ENCODE measurements at regions of chr19 and their contacts with region 1.

Region 1: GRCh38 chr19:48713864-48714758 is 5.4 kb downstream of the MAMSTR start:
- DNase-seq: peak; percentile 99
- ATAC-seq: peak; percentile 93
- H3K4me3 Mint-ChIP-seq: peak overlapping the region; percentile 83
- H3K27ac Mint-ChIP-seq: peak overlapping the region; percentile 84
- H3K4me1 Mint-ChIP-seq: peaks cover 14% of the 10 kb centered on the region
- H3K27me3 Mint-ChIP-seq: no peaks in the 10 kb centered on the region

Region 2: GRCh38 chr19:48203732-48204628 is 510.1 kb before region 1 on chr19:
- CTCF ChIA-PET with region 1: no interaction called
- POLR2A ChIA-PET with region 1: no interaction called
- intact Hi-C with region 1: no loop called
- DNase-seq: peak; percentile 97
- ATAC-seq: peak; percentile 100
- H3K4me3 Mint-ChIP-seq: no peak overlapping the region
- H3K27ac Mint-ChIP-seq: no peak overlapping the region
- H3K4me1 Mint-ChIP-seq: peaks cover 16% of the 10 kb centered on the region
- H3K27me3 Mint-ChIP-seq: no peaks in the 10 kb centered on the region

Region 3: GRCh38 chr19:48419158-48419920 is 294.8 kb before region 1 on chr19:
- CTCF ChIA-PET with region 1: no interaction called
- POLR2A ChIA-PET with region 1: no interaction called
- intact Hi-C with region 1: no loop called
- DNase-seq: peak; percentile 87
- ATAC-seq: peak; percentile 81
- H3K4me3 Mint-ChIP-seq: peak overlapping the region; percentile 29
- H3K27ac Mint-ChIP-seq: peak overlapping the region; percentile 83
- H3K4me1 Mint-ChIP-seq: peaks cover 21% of the 10 kb centered on the region
- H3K27me3 Mint-ChIP-seq: peaks cover 15% of the 10 kb centered on the region

Region 4: DNA sequence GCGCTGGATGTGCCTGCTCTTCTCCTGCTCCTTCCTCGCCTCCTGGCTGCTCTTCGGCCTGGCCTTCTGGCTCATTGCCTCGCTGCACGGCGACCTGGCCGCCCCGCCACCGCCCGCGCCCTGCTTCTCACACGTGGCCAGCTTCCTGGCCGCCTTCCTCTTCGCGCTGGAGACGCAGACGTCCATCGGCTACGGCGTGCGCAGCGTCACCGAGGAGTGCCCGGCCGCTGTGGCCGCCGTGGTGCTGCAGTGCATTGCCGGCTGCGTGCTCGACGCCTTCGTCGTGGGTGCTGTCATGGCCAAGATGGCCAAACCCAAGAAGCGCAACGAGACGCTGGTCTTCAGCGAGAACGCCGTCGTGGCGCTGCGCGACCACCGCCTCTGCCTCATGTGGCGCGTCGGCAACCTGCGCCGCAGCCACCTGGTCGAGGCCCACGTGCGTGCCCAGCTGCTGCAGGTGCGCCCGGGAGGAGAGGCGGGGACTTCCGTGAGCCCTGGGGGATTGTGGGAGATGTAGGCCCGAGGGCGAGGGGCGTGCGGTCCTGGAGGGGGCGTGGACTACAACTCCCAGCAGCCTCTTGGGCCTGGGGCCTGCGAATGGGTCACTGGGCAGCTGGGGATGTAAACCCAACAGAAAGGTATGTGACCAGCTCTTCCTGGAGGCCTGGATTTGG is 252.0 kb before region 1 on chr19:
- CTCF ChIA-PET with region 1: no interaction called
- POLR2A ChIA-PET with region 1: no interaction called
- intact Hi-C with region 1: no loop called
- DNase-seq: peak; percentile 43
- ATAC-seq: peak; percentile 60
- H3K4me3 Mint-ChIP-seq: no peak overlapping the region
- H3K27ac Mint-ChIP-seq: no peak overlapping the region
- H3K4me1 Mint-ChIP-seq: peaks cover 2% of the 10 kb centered on the region
- H3K27me3 Mint-ChIP-seq: no peaks in the 10 kb centered on the region

Region 5: DNA sequence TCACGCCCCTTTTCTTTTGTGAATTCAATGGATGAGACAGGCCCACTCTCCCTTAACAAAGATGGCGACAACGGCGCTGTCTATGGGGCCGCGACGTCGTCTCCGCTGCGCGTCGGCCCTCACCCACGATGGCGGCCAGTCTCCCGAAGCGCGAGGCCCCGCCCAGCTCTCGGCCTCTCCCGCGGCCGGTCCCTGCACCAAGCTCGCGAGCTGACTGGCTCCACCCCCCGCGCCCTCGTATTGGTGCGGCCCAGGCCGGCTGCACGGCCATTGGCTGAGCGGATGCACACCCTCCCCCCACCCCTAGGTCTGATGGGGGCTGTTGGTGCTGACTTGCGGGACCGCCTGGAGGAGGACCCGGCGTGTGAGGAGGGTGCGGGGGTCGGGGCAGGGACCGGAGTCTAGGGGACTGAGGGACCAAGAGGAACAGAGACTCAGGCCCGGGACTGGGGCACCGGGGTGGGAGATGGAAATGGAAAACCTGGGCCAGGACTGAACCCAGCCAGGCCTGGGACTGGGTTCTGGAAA is 90.0 kb before region 1 on chr19:
- CTCF ChIA-PET with region 1: no interaction called
- POLR2A ChIA-PET with region 1: no interaction called
- intact Hi-C with region 1: loop called in 1 of 2 experiments (anchors 1 kb)
- DNase-seq: peak; percentile 99
- ATAC-seq: peak; percentile 84
- H3K4me3 Mint-ChIP-seq: peak overlapping the region; percentile 73
- H3K27ac Mint-ChIP-seq: peak overlapping the region; percentile 99
- H3K4me1 Mint-ChIP-seq: peaks cover 45% of the 10 kb centered on the region
- H3K27me3 Mint-ChIP-seq: no peaks in the 10 kb centered on the region

Region 6: DNA sequence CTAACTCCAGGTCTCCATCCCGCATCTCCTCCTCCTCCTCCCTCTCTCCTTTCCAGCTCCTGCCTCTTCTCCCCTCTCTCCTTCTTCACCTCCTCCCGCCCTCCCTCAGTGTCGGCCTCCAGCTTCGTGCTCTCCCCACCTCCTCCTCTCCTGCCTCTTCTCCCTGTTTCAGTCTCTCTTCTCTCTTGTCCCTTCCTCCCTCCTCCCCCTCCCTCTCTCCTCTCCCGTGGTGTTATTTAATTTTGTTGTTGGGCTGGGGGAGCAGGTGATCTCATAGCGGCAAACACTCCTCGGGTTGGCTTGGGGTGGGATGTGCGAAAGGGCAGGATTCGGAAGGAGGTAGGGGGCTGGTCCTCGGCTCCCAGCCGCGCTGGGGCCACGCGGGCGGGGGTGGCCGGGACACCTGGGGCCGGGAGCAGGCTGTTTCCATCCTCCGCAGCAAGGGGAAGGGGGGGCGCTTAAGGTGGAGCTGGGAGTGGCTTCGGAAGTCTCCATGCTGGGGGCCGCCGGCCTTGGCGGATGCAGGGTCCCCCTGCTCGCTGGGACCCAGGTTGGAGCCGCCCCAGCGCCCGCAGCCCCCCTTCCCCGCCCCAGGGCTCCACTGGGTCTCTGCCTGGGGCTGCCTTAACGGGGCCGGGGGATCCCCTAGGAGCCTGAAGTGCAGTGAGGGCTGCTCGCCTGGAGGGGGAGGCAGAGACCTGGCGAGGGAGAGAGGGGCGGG is 68.0 kb before region 1 on chr19 and contains the start of gene CA11:
- CTCF ChIA-PET with region 1: no interaction called
- POLR2A ChIA-PET with region 1: no interaction called
- intact Hi-C with region 1: loop called (anchors 1 to 2 kb)
- DNase-seq: peak; percentile 96
- ATAC-seq: peak; percentile 85
- H3K4me3 Mint-ChIP-seq: peak within 1 kb of the TSS; percentile 79
- H3K27ac Mint-ChIP-seq: peak within 1 kb of the TSS; percentile 88
- H3K4me1 Mint-ChIP-seq: peaks cover 44% of the 10 kb centered on the region
- H3K27me3 Mint-ChIP-seq: no peaks in the 10 kb centered on the region
- total RNA-seq, gene CA11: 11.5 to 18.0 TPM

Region 7: DNA sequence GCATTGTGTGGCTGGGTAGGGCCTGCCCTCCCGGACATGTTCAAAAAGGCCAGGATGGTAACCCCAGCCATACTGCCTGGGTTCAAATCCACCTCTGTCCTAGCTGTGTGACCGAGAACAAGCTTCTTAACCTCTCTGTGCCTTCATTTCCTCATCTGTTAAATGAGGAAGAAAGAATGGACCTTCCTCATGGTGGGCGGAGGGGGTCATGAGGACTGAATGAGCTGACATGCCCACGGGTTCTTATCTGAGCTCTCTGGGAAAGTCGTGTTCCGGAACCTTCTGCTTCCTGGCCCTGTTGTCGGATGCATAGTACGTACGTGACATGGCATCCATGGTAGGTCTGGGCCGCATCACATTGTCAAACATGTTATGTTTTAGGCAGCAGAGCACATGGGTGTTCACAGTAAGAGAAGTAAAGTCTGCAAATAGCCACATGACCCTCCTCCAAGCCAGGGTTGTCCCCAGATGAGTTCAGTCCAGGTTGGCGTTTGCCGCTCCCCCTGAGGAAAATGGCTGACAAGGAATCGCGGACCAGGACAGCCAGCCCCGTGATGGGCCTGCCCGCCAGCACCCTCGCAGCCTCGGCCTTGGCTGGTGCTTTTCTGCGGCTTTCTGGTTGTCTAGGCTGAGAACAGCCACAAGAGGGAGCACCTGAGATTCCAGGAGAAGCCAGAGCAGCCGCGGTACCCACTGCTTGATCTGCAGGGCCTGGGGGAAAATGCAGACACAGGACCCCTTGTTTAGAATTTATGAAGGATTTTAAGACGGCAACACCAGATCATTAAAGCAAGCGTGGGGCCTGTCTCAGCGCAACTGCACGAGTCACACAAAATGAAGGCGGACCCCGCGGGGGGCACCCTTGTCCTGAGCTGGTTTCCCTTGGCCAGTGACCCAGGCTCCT is 38.9 kb before region 1 on chr19:
- CTCF ChIA-PET with region 1: interaction called, 14 read pairs
- POLR2A ChIA-PET with region 1: interaction called, 8 read pairs
- intact Hi-C with region 1: no loop called
- DNase-seq: peak; percentile 86
- ATAC-seq: peak; percentile 97
- H3K4me3 Mint-ChIP-seq: no peak overlapping the region
- H3K27ac Mint-ChIP-seq: no peak overlapping the region
- H3K4me1 Mint-ChIP-seq: peaks cover 7% of the 10 kb centered on the region
- H3K27me3 Mint-ChIP-seq: no peaks in the 10 kb centered on the region

Region 8: GRCh38 chr19:48844472-48844871 is 130.4 kb after region 1 on chr19:
- CTCF ChIA-PET with region 1: no interaction called
- POLR2A ChIA-PET with region 1: no interaction called
- intact Hi-C with region 1: no loop called
- DNase-seq: peak; percentile 17
- ATAC-seq: peak; percentile 72
- H3K4me3 Mint-ChIP-seq: no peak overlapping the region
- H3K27ac Mint-ChIP-seq: no peak overlapping the region
- H3K4me1 Mint-ChIP-seq: no peaks in the 10 kb centered on the region
- H3K27me3 Mint-ChIP-seq: no peaks in the 10 kb centered on the region

Region 9: GRCh38 chr19:49118565-49119410 is 404.7 kb after region 1 on chr19 and contains the start of gene C19orf73:
- CTCF ChIA-PET with region 1: no interaction called
- POLR2A ChIA-PET with region 1: no interaction called
- intact Hi-C with region 1: loop called in 1 of 2 experiments (anchors 1 kb)
- DNase-seq: peak; percentile 98
- ATAC-seq: peak; percentile 85
- H3K4me3 Mint-ChIP-seq: peak within 1 kb of the TSS; percentile 80
- H3K27ac Mint-ChIP-seq: peak within 1 kb of the TSS; percentile 84
- H3K4me1 Mint-ChIP-seq: peaks cover 28% of the 10 kb centered on the region
- H3K27me3 Mint-ChIP-seq: peaks cover 8% of the 10 kb centered on the region
- total RNA-seq, gene C19orf73: 1.7 to 2.0 TPM